ENCODE measurements at regions of chr6 and their contacts with region 1.

Region 1: GRCh38 chr6:166775180-166776081 is 148.4 kb upstream of the RPS6KA2 start:
- DNase-seq: no peak
- ATAC-seq: peak; percentile 44 to 77 (median 68)
- H3K4me3 ChIP-seq: no peak overlapping the region
- H3K27ac ChIP-seq: no peak overlapping the region
- H3K4me1 ChIP-seq: no peaks in the 10 kb centered on the region
- H3K27me3 ChIP-seq: peaks cover 0 to 11% (median 0%) of the 10 kb centered on the region in 3 donors
- CTCF ChIP-seq: peak; percentile 81

Region 2: DNA sequence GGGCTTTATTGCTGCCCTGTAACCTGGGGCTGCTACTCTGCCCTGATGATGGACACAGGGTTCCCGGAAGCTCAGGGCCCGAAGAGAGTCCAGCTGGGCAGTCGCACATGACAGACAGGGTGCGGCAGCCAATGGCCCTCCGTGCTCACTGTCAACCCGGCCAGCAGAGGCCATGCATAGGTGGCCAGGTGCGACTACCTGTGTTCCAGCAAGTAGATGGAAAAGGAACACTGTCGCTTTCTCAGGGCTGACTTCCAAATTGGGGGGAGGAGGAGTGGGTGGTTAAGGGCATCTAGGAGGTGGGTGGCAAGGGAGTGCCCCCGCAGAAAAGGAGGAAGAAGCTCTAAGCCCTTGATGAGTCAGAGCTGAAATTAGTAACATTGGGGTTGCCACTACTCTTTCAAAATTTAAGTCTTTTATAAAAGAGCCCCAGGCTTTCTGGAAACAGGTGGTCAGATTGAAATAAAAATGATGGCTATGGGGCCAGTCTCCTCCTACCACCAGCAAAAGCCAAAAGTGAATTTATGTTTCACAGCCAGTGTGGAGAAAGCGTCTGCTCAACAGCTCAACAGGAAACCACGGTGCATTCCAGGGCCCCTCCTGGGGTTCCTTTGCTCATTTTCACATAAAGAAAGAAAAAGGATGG is 186.6 kb before region 1 on chr6:
- intact Hi-C with region 1: no loop called
- DNase-seq: no peak
- ATAC-seq: peak in 3 of 4 donors; percentile 19 to 41 (median 25)
- H3K4me3 ChIP-seq: no peak overlapping the region
- H3K27ac ChIP-seq: no peak overlapping the region
- H3K4me1 ChIP-seq: peaks cover 40% of the 10 kb centered on the region
- H3K27me3 ChIP-seq: no peaks in the 10 kb centered on the region
- CTCF ChIP-seq: no peak

Region 3: GRCh38 chr6:166757232-166758135 is 17.9 kb before region 1 on chr6:
- intact Hi-C with region 1: no loop called
- DNase-seq: no peak
- ATAC-seq: no peak
- H3K4me3 ChIP-seq: no peak overlapping the region
- H3K27ac ChIP-seq: no peak overlapping the region
- H3K4me1 ChIP-seq: no peaks in the 10 kb centered on the region
- H3K27me3 ChIP-seq: peaks cover 0 to 15% (median 4%) of the 10 kb centered on the region in 3 donors
- CTCF ChIP-seq: no peak

Region 4: GRCh38 chr6:166989427-166990032 is 214.1 kb after region 1 on chr6:
- intact Hi-C with region 1: loop called (anchors 5 to 10 kb)
- DNase-seq: no peak
- ATAC-seq: no peak
- H3K4me3 ChIP-seq: no peak overlapping the region
- H3K27ac ChIP-seq: no peak overlapping the region
- H3K4me1 ChIP-seq: no peaks in the 10 kb centered on the region
- H3K27me3 ChIP-seq: no peaks in the 10 kb centered on the region
- CTCF ChIP-seq: peak; percentile 31

Region 5: GRCh38 chr6:167141667-167142432 is 366.4 kb after region 1 on chr6:
- intact Hi-C with region 1: loop called (anchors 5 to 10 kb)
- DNase-seq: no peak
- ATAC-seq: peak; percentile 46 to 66 (median 61)
- H3K4me3 ChIP-seq: no peak overlapping the region
- H3K27ac ChIP-seq: no peak overlapping the region
- H3K4me1 ChIP-seq: no peaks in the 10 kb centered on the region
- H3K27me3 ChIP-seq: peaks cover 0 to 11% (median 3%) of the 10 kb centered on the region in 3 donors
- CTCF ChIP-seq: peak; percentile 56

Region 6: DNA sequence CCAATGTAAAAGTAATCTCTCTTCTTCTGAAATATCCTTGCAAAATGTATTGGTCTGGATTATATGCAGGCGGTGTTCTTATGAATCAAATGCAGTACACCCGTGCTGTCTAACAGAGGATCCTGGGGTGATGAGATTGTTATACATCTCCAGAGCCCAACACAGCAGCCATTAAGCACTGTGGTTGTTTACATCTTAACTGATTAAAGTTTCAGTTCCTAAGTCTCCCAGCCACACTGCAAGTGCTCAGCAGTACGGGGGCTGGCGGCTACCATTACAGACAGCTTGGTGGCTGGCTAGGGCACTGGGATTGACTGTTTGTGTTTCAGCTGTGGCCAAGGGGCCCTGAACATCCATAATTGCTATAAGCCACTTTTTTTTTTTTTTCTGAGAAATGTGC is 522.7 kb after region 1 on chr6:
- intact Hi-C with region 1: loop called (anchors 10 kb)
- DNase-seq: no peak
- ATAC-seq: no peak
- H3K4me3 ChIP-seq: no peak overlapping the region
- H3K27ac ChIP-seq: no peak overlapping the region
- H3K4me1 ChIP-seq: no peaks in the 10 kb centered on the region
- H3K27me3 ChIP-seq: peaks cover 0 to 3% (median 2%) of the 10 kb centered on the region in 3 donors
- CTCF ChIP-seq: no peak